ENCODE measurements at regions of chr17 and their contacts with region 1.

Region 1: DNA sequence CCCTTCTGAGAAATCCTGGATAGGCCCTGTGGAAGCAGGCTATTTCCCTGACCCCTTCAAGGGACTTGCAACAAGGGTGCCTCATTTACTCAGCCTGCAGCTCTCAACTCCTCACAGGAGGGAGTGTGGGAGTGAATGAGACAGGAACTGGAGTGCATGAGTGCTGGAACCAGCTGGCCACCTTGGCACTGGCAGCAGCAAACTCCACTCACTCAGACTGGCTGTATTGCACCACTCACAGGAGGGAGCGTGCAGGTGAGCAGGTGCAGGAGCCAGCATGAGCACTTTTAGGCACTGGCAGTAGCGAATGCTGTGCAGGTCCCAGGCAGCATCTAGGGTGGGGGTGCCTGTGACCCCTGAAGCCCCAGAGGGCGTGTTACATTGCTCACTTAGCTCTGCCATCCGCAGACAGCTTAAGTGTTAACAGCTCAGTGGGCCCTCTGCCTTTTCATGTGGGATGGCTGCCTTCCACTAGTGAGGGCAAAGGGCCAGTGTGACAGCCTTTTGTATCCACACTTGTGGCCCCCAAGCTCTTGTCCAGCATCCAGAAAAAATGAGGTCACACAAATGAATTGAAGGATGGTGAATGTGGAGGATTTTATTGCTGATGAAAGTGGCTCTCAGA is 11.0 kb upstream of the ZNHIT3 start:
- DNase-seq: no peak
- ATAC-seq: no peak
- H3K4me3 ChIP-seq: no peak overlapping the region
- H3K27ac ChIP-seq: no peak overlapping the region
- H3K4me1 ChIP-seq: no peaks in the 10 kb centered on the region
- H3K27me3 ChIP-seq: peaks cover 4 to 15% of the 10 kb centered on the region in 2 experiments; a peak in 4 of 5 replicates
- CTCF ChIP-seq: no peak
- EP300 ChIP-seq: no peak
- POLR2A ChIP-seq: no peak
- RAD21 ChIP-seq: no peak

Region 2: GRCh38 chr17:36198831-36199465 is 276.5 kb before region 1 on chr17:
- CTCF ChIA-PET with region 1: no interaction called
- POLR2A ChIA-PET with region 1: no interaction called
- in situ Hi-C with region 1: loop called (anchors 10 kb)
- intact Hi-C with region 1: no loop called
- DNase-seq: no peak
- ATAC-seq: no peak
- H3K4me3 ChIP-seq: no peak overlapping the region
- H3K27ac ChIP-seq: no peak overlapping the region
- H3K4me1 ChIP-seq: no peaks in the 10 kb centered on the region; a peak in 2 of 5 replicates
- H3K27me3 ChIP-seq: peaks cover 10 to 27% of the 10 kb centered on the region in 2 experiments; a peak in 4 of 5 replicates
- CTCF ChIP-seq: no peak
- EP300 ChIP-seq: no peak
- POLR2A ChIP-seq: no peak
- RAD21 ChIP-seq: no peak

Region 3: GRCh38 chr17:36486204-36487194 is 11.0 kb after region 1 on chr17 and contains the start of gene ZNHIT3:
- CTCF ChIA-PET with region 1: no interaction called
- POLR2A ChIA-PET with region 1: no interaction called
- in situ Hi-C with region 1: no loop called
- intact Hi-C with region 1: no loop called
- DNase-seq: peak; percentile 91 to 97 (median 94)
- ATAC-seq: peak; percentile 95
- H3K4me3 ChIP-seq: peak within 1 kb of the TSS; percentile 85
- H3K27ac ChIP-seq: peak within 1 kb of the TSS; percentile 64
- H3K4me1 ChIP-seq: peaks cover 14 to 27% of the 10 kb centered on the region in 2 experiments; a peak in 4 of 5 replicates
- H3K27me3 ChIP-seq: no peaks in the 10 kb centered on the region; a peak in 1 of 5 replicates
- CTCF ChIP-seq: no peak
- EP300 ChIP-seq: no peak
- POLR2A ChIP-seq: peak; percentile 82
- RAD21 ChIP-seq: no peak
- polyA plus RNA-seq, gene ZNHIT3: 270 to 300 TPM